Endothelial cell of umbilical vein (primary cell): ENCODE measurements at regions of chr3 and their contacts with region 1.

Region 1: GRCh38 chr3:141460097-141460704 is 26.6 kb upstream of the RASA2 start:
- DNase-seq: peak; percentile 77
- H3K4me3 ChIP-seq: no peak overlapping the region
- H3K27ac ChIP-seq: no peak overlapping the region
- H3K4me1 ChIP-seq: no peaks in the 10 kb centered on the region
- H3K27me3 ChIP-seq: no peaks in the 10 kb centered on the region
- CTCF ChIP-seq: peak; percentile 83 to 86
- POLR2A ChIP-seq: no peak

Region 2: GRCh38 chr3:141303481-141304223 is 156.5 kb before region 1 on chr3:
- CTCF ChIA-PET with region 1: interaction called, 351 read pairs
- POLR2A ChIA-PET with region 1: interaction called, 4 read pairs
- dilution Hi-C with region 1: no loop called
- intact Hi-C with region 1: no loop called
- DNase-seq: peak; percentile 86
- H3K4me3 ChIP-seq: no peak overlapping the region
- H3K27ac ChIP-seq: no peak overlapping the region
- H3K4me1 ChIP-seq: no peaks in the 10 kb centered on the region
- H3K27me3 ChIP-seq: peaks cover 0 to 6% of the 10 kb centered on the region in 2 experiments
- CTCF ChIP-seq: peak; percentile 53 to 68
- POLR2A ChIP-seq: no peak

Region 3: GRCh38 chr3:141477224-141477623 is 17.0 kb after region 1 on chr3:
- CTCF ChIA-PET with region 1: interaction called, 16 read pairs
- POLR2A ChIA-PET with region 1: no interaction called
- dilution Hi-C with region 1: no loop called
- intact Hi-C with region 1: loop called (anchors 2 kb)
- DNase-seq: peak; percentile 82
- H3K4me3 ChIP-seq: no peak overlapping the region
- H3K27ac ChIP-seq: peak overlapping the region; percentile 48
- H3K4me1 ChIP-seq: peaks cover 9% of the 10 kb centered on the region
- H3K27me3 ChIP-seq: no peaks in the 10 kb centered on the region
- CTCF ChIP-seq: no peak
- POLR2A ChIP-seq: no peak

Region 4: DNA sequence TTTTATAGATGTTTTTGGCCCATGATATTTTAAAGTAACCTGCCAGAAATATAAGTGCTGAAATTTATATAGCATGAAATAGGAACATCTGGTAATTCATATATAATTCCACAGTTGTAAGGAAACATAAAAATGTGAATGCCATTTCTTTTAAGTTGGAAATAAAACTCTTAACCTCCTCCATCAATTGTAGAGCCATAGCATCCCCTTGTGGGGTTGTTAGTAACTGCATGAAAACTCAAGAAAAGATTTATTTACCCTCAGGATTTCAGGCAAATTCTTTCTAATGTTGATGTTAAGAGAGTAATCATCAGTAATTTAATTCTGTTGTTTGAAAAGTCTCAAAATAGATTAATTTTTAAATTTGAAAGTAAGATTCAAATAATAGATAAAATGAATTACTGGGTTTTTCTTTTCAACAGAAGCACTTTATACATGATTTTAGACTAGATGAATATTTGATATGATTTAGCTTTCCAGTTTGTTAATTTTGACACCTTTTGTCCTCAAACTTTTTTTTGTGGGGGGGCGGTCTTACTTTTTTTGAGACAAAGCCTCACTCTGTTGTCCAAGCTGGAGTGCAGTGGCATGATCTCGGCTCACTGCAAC is 101.3 kb after region 1 on chr3:
- CTCF ChIA-PET with region 1: interaction called, 222 read pairs
- POLR2A ChIA-PET with region 1: no interaction called
- dilution Hi-C with region 1: no loop called
- intact Hi-C with region 1: loop called (anchors 1 kb)
- DNase-seq: peak; percentile 85
- H3K4me3 ChIP-seq: no peak overlapping the region
- H3K27ac ChIP-seq: no peak overlapping the region
- H3K4me1 ChIP-seq: peaks cover 15% of the 10 kb centered on the region
- H3K27me3 ChIP-seq: no peaks in the 10 kb centered on the region
- CTCF ChIP-seq: peak; percentile 72 to 75
- POLR2A ChIP-seq: no peak

Region 5: DNA sequence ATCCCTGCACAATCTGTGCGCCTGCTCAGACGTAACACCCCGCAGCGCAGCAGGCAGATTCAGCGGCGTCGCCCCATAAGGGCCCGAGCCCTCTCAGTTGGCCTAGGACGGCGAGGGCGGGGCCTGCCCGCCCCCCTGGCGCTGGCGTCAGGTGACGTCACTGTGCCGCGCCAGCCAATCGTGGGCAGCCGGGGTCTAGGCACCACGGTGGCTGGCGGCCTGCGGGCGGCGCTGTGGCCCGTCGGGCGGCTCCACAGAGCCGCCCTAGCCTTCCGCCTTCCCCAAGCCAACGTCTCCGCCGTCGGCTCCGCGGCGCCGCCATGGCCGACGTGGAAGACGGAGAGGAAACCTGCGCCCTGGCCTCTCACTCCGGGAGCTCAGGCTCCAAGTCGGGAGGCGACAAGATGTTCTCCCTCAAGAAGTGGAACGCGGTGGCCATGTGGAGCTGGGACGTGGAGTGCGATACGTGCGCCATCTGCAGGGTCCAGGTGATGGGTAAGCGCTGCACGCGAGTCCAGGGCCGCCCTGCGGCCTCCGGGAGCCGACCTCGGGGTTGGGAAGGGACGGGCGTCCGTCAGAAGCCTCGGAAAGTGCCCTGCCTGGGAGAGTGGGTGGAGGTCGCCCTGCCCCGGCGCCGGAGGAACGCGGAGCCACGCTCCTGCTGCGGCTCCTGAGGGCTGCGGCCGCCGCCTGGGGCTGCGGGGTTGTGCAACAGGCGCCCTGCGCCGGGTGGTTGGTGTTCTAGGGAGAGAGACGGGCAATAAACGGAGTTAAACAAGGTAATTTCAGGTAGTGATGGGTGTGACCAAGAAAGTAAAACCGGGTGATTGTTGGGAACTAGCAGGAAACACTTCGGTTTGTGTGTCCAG is 278.1 kb after region 1 on chr3 and contains the start of gene RNF7:
- CTCF ChIA-PET with region 1: no interaction called
- POLR2A ChIA-PET with region 1: no interaction called
- dilution Hi-C with region 1: no loop called
- intact Hi-C with region 1: loop called (anchors 2 kb)
- DNase-seq: peak; percentile 96
- H3K4me3 ChIP-seq: peak within 1 kb of the TSS; percentile 39 to 96 (median 85)
- H3K27ac ChIP-seq: peak within 1 kb of the TSS; percentile 72
- H3K4me1 ChIP-seq: peaks cover 19% of the 10 kb centered on the region
- H3K27me3 ChIP-seq: peaks cover 0 to 2% of the 10 kb centered on the region in 2 experiments
- CTCF ChIP-seq: peak; percentile 91 to 98
- POLR2A ChIP-seq: peak; percentile 76
- total RNA-seq, gene RNF7: 121 and 136 TPM in 2 replicates

Region 6: GRCh38 chr3:141998669-141999290 is 538.6 kb after region 1 on chr3:
- CTCF ChIA-PET with region 1: no interaction called
- POLR2A ChIA-PET with region 1: no interaction called
- dilution Hi-C with region 1: no loop called
- intact Hi-C with region 1: loop called (anchors 1 kb)
- DNase-seq: peak; percentile 19
- H3K4me3 ChIP-seq: no peak overlapping the region
- H3K27ac ChIP-seq: no peak overlapping the region
- H3K4me1 ChIP-seq: no peaks in the 10 kb centered on the region
- H3K27me3 ChIP-seq: no peaks in the 10 kb centered on the region
- CTCF ChIP-seq: peak in 1 of 2 donors; percentile 8
- POLR2A ChIP-seq: no peak